ENCODE measurements at regions of chr11 and their contacts with region 1.

Region 1: DNA sequence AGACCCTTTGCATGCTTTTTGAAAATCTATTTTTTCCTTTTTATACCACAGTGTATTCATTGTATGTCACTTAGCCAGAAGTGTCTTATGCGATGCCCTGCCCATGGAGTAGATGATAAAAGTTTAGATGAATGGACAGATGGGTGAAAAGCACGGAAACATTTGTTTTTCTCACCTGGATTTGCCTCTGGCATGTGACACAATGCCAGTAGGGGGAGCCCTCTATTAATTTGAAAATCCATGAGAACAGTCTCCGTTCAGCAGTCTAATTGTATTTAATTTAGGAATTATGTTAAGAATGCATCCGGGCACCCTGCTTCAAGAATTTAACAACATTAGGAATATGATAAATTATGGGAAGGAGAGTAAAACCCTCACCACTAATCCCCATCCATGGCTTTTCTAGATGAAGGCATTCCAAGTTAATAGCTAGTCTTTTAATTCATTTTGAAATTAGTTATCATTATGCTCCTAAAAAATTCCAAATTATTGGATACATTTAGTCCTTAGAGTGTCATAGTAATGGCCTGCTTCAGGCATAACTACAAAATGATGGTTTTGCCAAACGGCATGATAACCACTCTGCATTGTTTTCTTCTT is 55.3 kb upstream of the ALKBH3 start:
- DNase-seq: no peak
- H3K4me3 ChIP-seq: no peak overlapping the region
- H3K27ac ChIP-seq: no peak overlapping the region
- H3K4me1 ChIP-seq: peaks cover 0 to under 1% (median 0%) of the 10 kb centered on the region in 4 donors
- H3K27me3 ChIP-seq: no peaks in the 10 kb centered on the region
- CTCF ChIP-seq: peak; percentile 23 to 57

Region 2: DNA sequence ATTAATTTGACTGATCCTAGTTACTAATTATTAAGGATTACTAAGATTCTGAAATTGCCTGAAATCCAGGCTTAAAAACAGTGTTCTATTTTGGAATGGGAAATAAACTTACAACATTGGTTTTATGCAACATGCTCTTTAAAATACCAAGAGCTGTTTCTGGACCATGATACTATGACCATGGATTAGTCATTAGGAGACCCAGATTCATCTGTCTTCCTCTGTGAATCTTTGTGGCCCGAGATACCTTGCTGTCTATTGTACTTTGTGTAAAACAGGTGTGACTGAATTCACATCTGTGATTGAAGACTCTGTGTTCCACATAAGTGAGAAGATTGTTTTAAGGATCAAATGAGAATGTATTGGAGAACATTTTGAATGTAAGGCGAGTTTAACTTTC is 46.0 kb before region 1 on chr11:
- intact Hi-C with region 1: no loop called
- DNase-seq: no peak
- H3K4me3 ChIP-seq: no peak overlapping the region
- H3K27ac ChIP-seq: no peak overlapping the region
- H3K4me1 ChIP-seq: no peaks in the 10 kb centered on the region
- H3K27me3 ChIP-seq: no peaks in the 10 kb centered on the region
- CTCF ChIP-seq: no peak

Region 3: DNA sequence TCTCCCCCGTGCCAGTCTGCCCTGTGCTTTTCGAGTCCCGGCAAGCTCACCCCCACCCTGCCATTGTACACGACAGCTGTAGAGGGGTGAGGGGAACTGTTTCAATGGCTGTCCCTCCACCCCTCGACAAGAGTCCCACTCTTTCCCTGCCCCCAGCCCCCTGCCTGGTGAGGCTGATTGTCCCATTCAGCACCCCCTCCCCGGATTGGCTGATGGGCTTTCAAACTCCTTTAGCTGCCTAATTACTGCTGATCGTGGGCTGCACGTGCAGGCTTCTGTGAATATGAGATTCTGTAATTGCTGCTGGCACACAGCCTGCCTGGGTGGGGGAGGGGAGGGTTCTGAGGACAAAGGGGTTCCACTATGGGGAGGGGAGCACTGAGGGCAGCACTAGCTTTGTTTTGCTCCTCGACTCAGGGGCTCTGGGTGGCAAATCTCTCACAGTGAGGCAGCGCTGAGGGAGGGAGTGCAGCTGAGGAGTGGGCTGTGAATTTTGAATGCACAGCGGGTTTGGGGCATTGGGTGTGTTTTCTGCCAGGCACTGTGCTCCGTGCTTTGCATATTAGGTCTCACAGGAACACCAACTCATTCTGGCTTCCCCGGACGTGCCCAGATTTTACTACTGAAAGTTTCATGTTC is 179.9 kb after region 1 on chr11:
- intact Hi-C with region 1: no loop called
- DNase-seq: peak; percentile 19 to 62
- H3K4me3 ChIP-seq: no peak overlapping the region
- H3K27ac ChIP-seq: peak overlapping the region; percentile 78 to 80
- H3K4me1 ChIP-seq: peaks cover 0 to 92% (median 41%) of the 10 kb centered on the region in 4 donors
- H3K27me3 ChIP-seq: no peaks in the 10 kb centered on the region
- CTCF ChIP-seq: no peak

Region 4: DNA sequence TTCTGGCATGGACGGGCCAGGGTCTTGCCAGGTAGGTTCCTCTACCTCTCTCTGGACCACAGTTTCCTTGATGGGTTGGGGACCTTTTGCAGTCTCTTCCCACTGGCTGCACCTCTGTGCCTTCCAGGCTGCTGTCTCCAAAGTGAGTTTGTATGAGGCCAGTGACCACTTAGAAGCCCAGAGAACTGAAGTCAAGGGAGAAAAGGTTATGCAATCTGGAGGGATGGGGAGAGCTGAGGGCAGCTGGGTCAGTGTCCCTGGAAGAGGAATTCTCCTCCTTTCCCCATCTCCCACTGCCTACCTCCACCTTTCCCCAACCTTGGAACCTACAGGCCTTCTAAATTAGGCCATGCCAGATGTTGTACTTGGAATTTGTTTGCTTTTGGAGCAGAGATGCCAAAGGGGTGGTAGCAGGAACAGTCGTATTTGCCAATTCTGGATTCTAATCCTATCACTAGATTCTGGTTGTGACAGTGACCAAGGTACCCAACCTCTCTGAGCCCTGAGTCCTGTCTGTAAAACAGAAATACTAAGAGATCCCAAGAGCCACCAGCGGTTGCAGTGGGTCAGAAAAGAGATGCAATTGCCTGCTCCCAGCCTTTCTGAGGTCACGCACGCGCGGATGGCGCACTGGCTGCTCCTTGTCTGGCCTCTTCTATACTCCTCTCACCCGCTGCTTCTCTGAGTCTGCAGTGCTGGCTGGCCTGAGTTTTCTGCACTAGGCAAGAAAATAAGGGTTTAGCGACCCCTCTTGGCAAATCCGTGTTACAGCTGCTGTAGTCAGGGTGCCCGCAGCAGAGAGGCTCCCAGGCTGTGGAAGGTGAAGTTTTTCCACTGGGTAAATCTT is 211.7 kb after region 1 on chr11:
- intact Hi-C with region 1: loop called (anchors 5 kb)
- DNase-seq: peak; percentile 93 to 95
- H3K4me3 ChIP-seq: no peak overlapping the region
- H3K27ac ChIP-seq: peak overlapping the region; percentile 88 to 91
- H3K4me1 ChIP-seq: peaks cover 0 to 49% (median 27%) of the 10 kb centered on the region in 4 donors
- H3K27me3 ChIP-seq: no peaks in the 10 kb centered on the region
- CTCF ChIP-seq: peak; percentile 90 to 95

Measured in tibial artery (tissue), 4 donors.